Caco-2 (cell line): ENCODE measurements at regions of chr2 and their contacts with region 1.

Region 1: DNA sequence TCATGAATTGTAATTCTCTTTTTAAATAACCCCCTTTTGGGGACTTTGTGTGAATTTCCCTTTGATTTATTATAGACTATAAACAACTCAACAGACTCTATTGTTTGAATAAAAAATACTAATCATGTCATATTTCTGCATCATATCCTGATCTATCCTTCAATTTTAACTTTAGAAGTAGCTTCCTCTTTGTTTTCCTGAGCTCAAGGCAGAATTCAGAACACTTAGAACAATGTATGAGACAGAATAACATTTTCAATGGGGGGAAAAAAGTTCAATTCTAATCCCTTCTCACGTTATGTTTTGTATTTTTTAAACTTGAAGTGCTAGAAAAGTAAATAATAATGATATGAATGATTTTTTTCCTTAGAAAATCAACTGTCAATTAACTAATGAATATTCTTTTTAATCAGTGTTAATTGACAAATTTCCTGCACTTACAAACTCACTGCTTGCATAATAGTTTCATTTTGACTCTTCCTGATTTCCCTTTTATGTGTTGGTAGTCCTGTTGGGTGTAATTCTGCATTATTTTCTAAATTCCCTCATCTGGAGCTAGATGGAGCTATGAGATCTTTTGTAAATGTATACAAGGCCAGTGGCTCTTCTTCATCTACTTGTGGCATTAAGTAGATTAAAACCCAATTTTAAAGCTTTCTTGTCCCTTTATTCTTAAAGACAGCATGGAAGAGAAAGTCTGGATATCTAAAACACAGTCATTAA is 326.1 kb downstream of the PARD3B start:
- DNase-seq: peak in 1 of 2 experiments; percentile 16
- H3K4me3 ChIP-seq: no peak overlapping the region
- H3K4me3 Mint-ChIP-seq: no peak overlapping the region
- H3K27ac Mint-ChIP-seq: no peak overlapping the region
- H3K4me1 ChIP-seq: no peaks in the 10 kb centered on the region
- H3K4me1 Mint-ChIP-seq: peaks cover 20% of the 10 kb centered on the region
- H3K27me3 ChIP-seq: no peaks in the 10 kb centered on the region
- H3K27me3 Mint-ChIP-seq: no peaks in the 10 kb centered on the region
- CTCF ChIP-seq: peak; percentile 32 to 44

Region 2: DNA sequence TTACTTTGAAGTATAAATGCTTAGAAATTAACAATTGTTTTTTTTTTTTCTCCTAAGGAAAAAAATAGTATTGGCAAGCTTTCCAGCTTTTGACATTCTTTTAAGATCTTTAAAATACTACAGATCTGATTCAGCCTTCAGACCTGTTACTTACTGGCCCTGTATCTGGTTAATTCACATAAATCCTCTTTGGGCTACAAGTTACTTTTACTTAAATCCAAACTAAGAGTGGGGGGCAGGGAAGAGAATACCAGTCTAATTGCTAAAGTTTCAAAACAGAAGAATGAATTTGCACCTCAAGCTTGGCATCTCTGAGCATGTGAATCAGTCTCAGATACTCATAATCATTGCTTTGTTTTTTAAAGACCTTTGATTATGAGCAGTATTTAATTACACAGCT is 60.2 kb after region 1 on chr2:
- CTCF ChIA-PET with region 1: no interaction called
- POLR2A ChIA-PET with region 1: no interaction called
- intact Hi-C with region 1: no loop called
- DNase-seq: no peak
- H3K4me3 ChIP-seq: no peak overlapping the region
- H3K4me3 Mint-ChIP-seq: no peak overlapping the region
- H3K27ac Mint-ChIP-seq: no peak overlapping the region
- H3K4me1 ChIP-seq: no peaks in the 10 kb centered on the region
- H3K4me1 Mint-ChIP-seq: peaks cover 6% of the 10 kb centered on the region
- H3K27me3 ChIP-seq: no peaks in the 10 kb centered on the region
- H3K27me3 Mint-ChIP-seq: no peaks in the 10 kb centered on the region
- CTCF ChIP-seq: no peak

Region 3: DNA sequence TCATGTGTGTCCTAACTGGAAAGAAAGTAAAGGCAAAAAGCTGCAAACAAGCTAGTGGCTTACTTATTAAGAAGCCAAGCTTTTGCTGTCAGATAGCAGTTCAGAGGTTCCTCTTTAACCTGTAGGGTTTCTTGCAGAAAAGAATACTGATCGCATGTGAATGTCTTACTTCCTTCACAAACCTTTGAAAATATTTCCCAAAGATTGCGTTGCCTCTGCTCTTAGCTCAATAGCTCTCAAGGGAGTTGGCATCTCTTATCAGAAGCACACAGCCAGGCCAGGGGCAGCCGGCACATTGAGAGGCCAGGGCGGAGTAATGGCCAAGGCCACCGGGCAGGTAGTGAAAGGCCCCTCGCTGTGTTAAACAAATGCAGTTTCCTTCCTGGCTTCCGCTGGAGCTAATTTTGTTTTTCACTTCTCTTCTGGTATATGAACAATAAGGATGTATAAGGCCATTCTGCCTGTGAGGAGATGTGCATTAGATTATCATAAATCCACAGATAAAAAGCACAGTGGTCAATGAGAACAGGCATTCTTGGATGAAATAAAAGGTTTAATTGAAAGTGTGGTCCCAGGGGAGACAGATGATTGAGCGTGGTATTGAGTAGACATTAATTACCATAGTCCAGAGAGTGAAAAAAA is 268.6 kb after region 1 on chr2:
- CTCF ChIA-PET with region 1: no interaction called
- POLR2A ChIA-PET with region 1: no interaction called
- intact Hi-C with region 1: loop called (anchors 10 kb)
- DNase-seq: no peak
- H3K4me3 ChIP-seq: no peak overlapping the region
- H3K4me3 Mint-ChIP-seq: no peak overlapping the region
- H3K27ac Mint-ChIP-seq: no peak overlapping the region
- H3K4me1 ChIP-seq: no peaks in the 10 kb centered on the region
- H3K4me1 Mint-ChIP-seq: no peaks in the 10 kb centered on the region
- H3K27me3 ChIP-seq: no peaks in the 10 kb centered on the region
- H3K27me3 Mint-ChIP-seq: no peaks in the 10 kb centered on the region
- CTCF ChIP-seq: no peak